ENCODE measurements at regions of chr20 and their contacts with region 1.

Region 1: GRCh38 chr20:44765652-44766347 is 20.1 kb downstream of the KCNK15 start:
- DNase-seq: peak; percentile 84
- H3K4me3 Mint-ChIP-seq: no peak overlapping the region
- H3K27ac Mint-ChIP-seq: no peak overlapping the region
- H3K4me1 Mint-ChIP-seq: peaks cover 12% of the 10 kb centered on the region
- H3K27me3 Mint-ChIP-seq: peaks cover 43% of the 10 kb centered on the region
- CTCF ChIP-seq: no peak

Region 2: GRCh38 chr20:44785769-44786168 is 20.0 kb after region 1 on chr20:
- CTCF ChIA-PET with region 1: interaction called, 12 read pairs
- POLR2A ChIA-PET with region 1: no interaction called
- intact Hi-C with region 1: no loop called
- DNase-seq: peak; percentile 42
- H3K4me3 Mint-ChIP-seq: no peak overlapping the region
- H3K27ac Mint-ChIP-seq: no peak overlapping the region
- H3K4me1 Mint-ChIP-seq: no peaks in the 10 kb centered on the region
- H3K27me3 Mint-ChIP-seq: peaks cover 55% of the 10 kb centered on the region
- CTCF ChIP-seq: peak; percentile 11

Region 3: GRCh38 chr20:44942264-44942973 is 176.6 kb after region 1 on chr20:
- CTCF ChIA-PET with region 1: no interaction called
- POLR2A ChIA-PET with region 1: no interaction called
- intact Hi-C with region 1: no loop called
- DNase-seq: no peak
- H3K4me3 Mint-ChIP-seq: no peak overlapping the region
- H3K27ac Mint-ChIP-seq: no peak overlapping the region
- H3K4me1 Mint-ChIP-seq: no peaks in the 10 kb centered on the region
- H3K27me3 Mint-ChIP-seq: no peaks in the 10 kb centered on the region
- CTCF ChIP-seq: no peak

Measured in MCF 10A (cell line).